Common myeloid progenitor, CD34-positive (primary cell): ENCODE measurements at regions of chr3 and their contacts with region 1.

Region 1: GRCh38 chr3:32340039-32340438 is 51.6 kb upstream of the CMTM7 start:
- DNase-seq: peak; percentile 52 to 77 (median 75)
- H3K4me3 ChIP-seq: no peak overlapping the region
- H3K27ac ChIP-seq: no peak overlapping the region
- H3K4me1 ChIP-seq: no peaks in the 10 kb centered on the region
- H3K27me3 ChIP-seq: no peaks in the 10 kb centered on the region

Region 2: GRCh38 chr3:32177702-32178198 is 162.3 kb before region 1 on chr3:
- CTCF ChIA-PET with region 1: interaction called, 85 read pairs
- POLR2A ChIA-PET with region 1: no interaction called
- DNase-seq: peak; percentile 85 to 86 (median 85)
- H3K4me3 ChIP-seq: peak overlapping the region in 1 of 7 experiments; percentile 30
- H3K27ac ChIP-seq: no peak overlapping the region
- H3K4me1 ChIP-seq: peaks cover 0 to 8% (median 4%) of the 10 kb centered on the region in 4 experiments
- H3K27me3 ChIP-seq: no peaks in the 10 kb centered on the region

Region 3: GRCh38 chr3:32551087-32551486 is 211.0 kb after region 1 on chr3:
- CTCF ChIA-PET with region 1: no interaction called
- POLR2A ChIA-PET with region 1: no interaction called
- DNase-seq: no peak
- H3K4me3 ChIP-seq: no peak overlapping the region
- H3K27ac ChIP-seq: no peak overlapping the region
- H3K4me1 ChIP-seq: peaks cover 0 to 12% (median 5%) of the 10 kb centered on the region in 4 experiments
- H3K27me3 ChIP-seq: no peaks in the 10 kb centered on the region